CD14-positive monocyte (primary cell): ENCODE measurements at regions of chr7 and their contacts with region 1.

Region 1: DNA sequence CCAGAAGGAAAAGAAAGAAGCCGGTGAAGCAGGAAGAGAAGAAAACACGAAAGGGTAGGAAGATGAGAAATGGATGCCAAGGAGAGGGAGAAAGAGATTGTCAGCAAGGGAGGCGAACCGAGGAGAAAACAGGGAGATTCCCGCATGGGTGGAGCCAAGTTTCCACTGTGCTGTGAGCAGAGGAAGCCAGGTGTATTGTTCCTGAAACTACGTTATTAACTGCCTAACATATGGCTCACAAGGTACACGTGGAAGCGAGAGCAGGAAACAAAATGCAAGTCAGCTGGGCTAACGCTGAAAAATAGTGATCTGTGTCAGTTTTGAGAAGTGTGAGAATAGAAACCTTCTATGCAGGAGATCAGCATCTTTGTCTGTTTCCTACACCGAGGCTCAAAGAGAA is 20.4 kb upstream of the HIPK2 start:
- DNase-seq: no peak
- H3K4me3 ChIP-seq: no peak overlapping the region
- H3K4me3 Mint-ChIP-seq: peak overlapping the region; percentile 2 to 35
- H3K27ac ChIP-seq: no peak overlapping the region
- H3K27ac Mint-ChIP-seq: peak overlapping the region in 2 of 7 donors; percentile 7 to 69
- H3K4me1 ChIP-seq: peaks cover 22 to 26% of the 10 kb centered on the region in 2 donors
- H3K4me1 Mint-ChIP-seq: peaks cover 34% of the 10 kb centered on the region
- H3K27me3 ChIP-seq: no peaks in the 10 kb centered on the region
- H3K27me3 Mint-ChIP-seq: peaks cover 1 to 10% (median 2%) of the 10 kb centered on the region in 3 donors
- CTCF ChIP-seq: no peak

Region 2: GRCh38 chr7:139203992-139204391 is 594.2 kb before region 1 on chr7:
- intact Hi-C with region 1: no loop called
- DNase-seq: no peak
- H3K4me3 ChIP-seq: no peak overlapping the region
- H3K4me3 Mint-ChIP-seq: no peak overlapping the region
- H3K27ac ChIP-seq: no peak overlapping the region
- H3K27ac Mint-ChIP-seq: no peak overlapping the region
- H3K4me1 ChIP-seq: no peaks in the 10 kb centered on the region
- H3K4me1 Mint-ChIP-seq: no peaks in the 10 kb centered on the region
- H3K27me3 ChIP-seq: no peaks in the 10 kb centered on the region
- H3K27me3 Mint-ChIP-seq: peaks cover 0 to 3% (median 1%) of the 10 kb centered on the region in 3 donors
- CTCF ChIP-seq: no peak

Region 3: GRCh38 chr7:139548302-139549028 is 249.8 kb before region 1 on chr7:
- intact Hi-C with region 1: no loop called
- DNase-seq: no peak
- H3K4me3 ChIP-seq: no peak overlapping the region
- H3K4me3 Mint-ChIP-seq: no peak overlapping the region
- H3K27ac ChIP-seq: no peak overlapping the region
- H3K27ac Mint-ChIP-seq: peak overlapping the region in 1 of 7 donors; percentile 50
- H3K4me1 ChIP-seq: peaks cover 5 to 8% of the 10 kb centered on the region in 2 donors
- H3K4me1 Mint-ChIP-seq: peaks cover 6% of the 10 kb centered on the region
- H3K27me3 ChIP-seq: no peaks in the 10 kb centered on the region
- H3K27me3 Mint-ChIP-seq: peaks cover 1 to 6% (median 2%) of the 10 kb centered on the region in 3 donors
- CTCF ChIP-seq: no peak

Region 4: DNA sequence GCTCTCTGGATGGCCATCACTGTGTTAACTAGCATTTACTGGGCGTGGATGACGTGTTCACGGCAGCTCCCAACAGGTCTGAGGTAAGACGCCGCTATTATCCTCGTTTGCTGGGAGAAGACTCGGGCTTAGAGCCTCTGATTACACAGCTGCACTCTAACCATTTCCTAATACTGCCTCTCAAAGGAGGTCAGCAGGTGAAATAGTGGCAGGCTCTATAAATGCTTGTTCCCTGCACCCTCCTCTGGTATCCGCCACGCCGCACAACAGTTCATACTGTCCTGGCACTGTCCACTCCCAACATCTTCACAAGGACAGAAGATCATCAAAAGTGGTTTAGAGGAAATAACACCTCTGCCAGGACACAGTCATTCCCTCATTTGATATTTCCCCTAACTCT is 48.7 kb before region 1 on chr7:
- intact Hi-C with region 1: loop called in 1 of 2 experiments (anchors 2 kb)
- DNase-seq: no peak
- H3K4me3 ChIP-seq: no peak overlapping the region
- H3K4me3 Mint-ChIP-seq: no peak overlapping the region
- H3K27ac ChIP-seq: peak overlapping the region in 1 of 2 donors; percentile 62
- H3K27ac Mint-ChIP-seq: peak overlapping the region in 5 of 7 donors; percentile 5 to 91 (median 46)
- H3K4me1 ChIP-seq: peaks cover 30 to 40% of the 10 kb centered on the region in 2 donors
- H3K4me1 Mint-ChIP-seq: peaks cover 55% of the 10 kb centered on the region
- H3K27me3 ChIP-seq: no peaks in the 10 kb centered on the region
- H3K27me3 Mint-ChIP-seq: no peaks in the 10 kb centered on the region
- CTCF ChIP-seq: no peak

Region 5: DNA sequence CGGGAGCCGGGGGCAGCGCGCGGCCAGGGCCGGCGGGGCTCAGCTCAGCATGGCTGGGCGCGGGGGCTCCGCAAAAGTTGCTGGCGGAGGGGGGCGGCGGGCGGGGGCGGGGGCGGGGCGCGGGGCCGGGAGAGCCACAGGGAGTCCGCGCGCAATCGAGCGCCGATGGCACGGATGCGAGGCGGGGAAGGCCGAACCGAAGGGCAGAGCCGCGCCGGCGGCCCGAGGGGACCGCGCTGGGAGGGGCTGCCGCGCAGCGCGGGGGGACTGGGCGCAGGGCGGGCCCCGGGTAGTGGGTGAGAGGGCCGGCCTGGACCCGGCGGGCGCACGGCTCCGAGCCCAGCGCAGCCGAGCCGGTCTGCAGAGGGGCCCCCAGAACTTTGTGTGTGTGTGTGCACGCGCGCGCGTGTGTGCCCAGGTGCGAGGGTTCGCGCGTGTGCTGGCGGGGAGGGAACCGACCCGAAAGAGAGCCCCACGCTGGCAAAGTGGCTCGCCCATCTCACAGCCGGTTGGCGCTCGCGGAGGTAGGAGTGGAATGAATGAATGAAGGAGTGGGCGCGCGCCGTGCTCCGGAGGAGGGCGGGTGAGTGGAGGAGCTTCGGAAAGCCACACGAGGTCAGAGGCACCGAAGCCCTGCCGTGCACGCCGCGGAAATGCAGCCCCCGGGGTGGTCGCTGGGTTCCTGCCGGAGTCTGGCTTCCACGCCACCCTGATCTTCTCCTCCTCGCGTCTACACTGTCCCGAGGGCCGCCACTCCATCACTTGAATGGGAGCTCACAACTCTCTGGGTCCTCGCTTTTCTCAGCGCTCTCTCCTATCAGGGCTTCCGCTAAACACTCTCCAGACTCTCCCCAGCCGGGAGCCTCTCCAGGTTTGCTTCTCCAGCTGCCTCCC is 20.0 kb before region 1 on chr7 and contains the start of gene HIPK2:
- intact Hi-C with region 1: no loop called
- DNase-seq: peak; percentile 32 to 46 (median 42)
- H3K4me3 ChIP-seq: peak within 1 kb of the TSS; percentile 77 to 90 (median 89)
- H3K4me3 Mint-ChIP-seq: peak within 1 kb of the TSS; percentile 99 to 100
- H3K27ac ChIP-seq: peak within 1 kb of the TSS; percentile 86 to 94
- H3K27ac Mint-ChIP-seq: peak within 1 kb of the TSS; percentile 90 to 99 (median 97)
- H3K4me1 ChIP-seq: peaks cover 30 to 38% of the 10 kb centered on the region in 2 donors
- H3K4me1 Mint-ChIP-seq: peaks cover 37% of the 10 kb centered on the region
- H3K27me3 ChIP-seq: peaks cover 12 to 15% of the 10 kb centered on the region in 2 donors
- H3K27me3 Mint-ChIP-seq: peaks cover 19 to 22% (median 21%) of the 10 kb centered on the region in 3 donors
- CTCF ChIP-seq: no peak
- polyA plus RNA-seq, gene HIPK2: 1.6 to 12.1 (median 3.0) TPM